ENCODE measurements at regions of chr10 and their contacts with region 1.

Region 1: DNA sequence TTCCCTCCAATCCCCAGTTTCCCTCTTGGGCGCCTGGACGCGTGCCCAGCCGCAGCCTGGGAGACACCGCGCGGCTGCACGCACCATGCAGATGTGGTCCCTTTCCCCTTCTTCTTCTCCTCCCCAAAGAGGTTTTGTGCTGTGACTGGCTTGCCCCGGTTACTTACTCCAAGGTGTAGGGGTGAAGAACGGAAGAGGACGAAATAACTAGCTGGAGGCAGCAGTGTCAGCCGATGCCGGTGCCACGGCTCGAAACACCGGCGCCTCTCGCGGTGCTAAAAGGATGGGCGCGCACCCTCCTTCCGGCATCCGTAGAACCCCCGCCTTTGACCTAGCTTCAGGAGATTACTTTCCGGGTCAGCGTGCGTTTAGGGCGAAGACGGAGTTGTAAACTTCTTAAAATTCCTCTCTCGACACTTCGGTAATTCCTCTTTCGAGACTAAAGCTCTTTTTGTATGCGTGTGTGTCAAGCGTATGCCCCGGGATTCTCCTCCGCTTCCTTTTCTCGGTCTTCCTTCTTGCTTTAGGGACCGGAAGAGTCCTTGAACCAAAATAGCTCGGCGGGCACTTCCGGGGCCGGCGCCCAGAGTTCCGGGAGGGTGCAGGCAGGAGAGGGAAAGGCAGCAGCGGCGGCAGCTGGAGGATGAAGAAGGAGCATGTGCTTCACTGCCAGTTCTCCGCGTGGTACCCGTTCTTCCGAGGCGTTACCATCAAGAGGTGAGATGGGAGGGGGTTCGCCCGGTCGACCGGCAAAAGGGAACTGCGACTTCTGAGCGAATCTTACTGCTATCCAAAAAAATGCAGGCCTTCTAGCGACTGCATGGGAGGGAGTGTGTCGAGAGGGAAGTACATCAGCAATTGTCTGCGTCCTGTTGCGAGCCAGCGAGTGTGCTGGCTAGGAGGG is at the starts of genes CDC123 and NUDT5:
- DNase-seq: peak; percentile 83
- H3K4me3 Mint-ChIP-seq: peak within 1 kb of the TSS; percentile 90
- H3K27ac Mint-ChIP-seq: peak within 1 kb of the TSS; percentile 97
- H3K4me1 Mint-ChIP-seq: peaks cover 60% of the 10 kb centered on the region
- H3K27me3 Mint-ChIP-seq: no peaks in the 10 kb centered on the region
- total RNA-seq, gene CDC123: 190 and 191 TPM in 2 replicates
- total RNA-seq, gene NUDT5: 121 and 131 TPM in 2 replicates

Region 2: GRCh38 chr10:11181978-11182377 is 1013.9 kb before region 1 on chr10:
- intact Hi-C with region 1: no loop called
- DNase-seq: no peak
- H3K4me3 Mint-ChIP-seq: no peak overlapping the region
- H3K27ac Mint-ChIP-seq: peak overlapping the region; percentile 81
- H3K4me1 Mint-ChIP-seq: peaks cover 52% of the 10 kb centered on the region
- H3K27me3 Mint-ChIP-seq: no peaks in the 10 kb centered on the region

Region 3: GRCh38 chr10:12042797-12043651 is 152.8 kb before region 1 on chr10 and contains the start of gene UPF2:
- intact Hi-C with region 1: loop called (anchors 1 kb)
- DNase-seq: peak; percentile 94
- H3K4me3 Mint-ChIP-seq: peak within 1 kb of the TSS; percentile 99
- H3K27ac Mint-ChIP-seq: peak within 1 kb of the TSS; percentile 99
- H3K4me1 Mint-ChIP-seq: peaks cover 34% of the 10 kb centered on the region
- H3K27me3 Mint-ChIP-seq: no peaks in the 10 kb centered on the region
- total RNA-seq, gene UPF2: 38.9 and 43.6 TPM in 2 replicates

Region 4: DNA sequence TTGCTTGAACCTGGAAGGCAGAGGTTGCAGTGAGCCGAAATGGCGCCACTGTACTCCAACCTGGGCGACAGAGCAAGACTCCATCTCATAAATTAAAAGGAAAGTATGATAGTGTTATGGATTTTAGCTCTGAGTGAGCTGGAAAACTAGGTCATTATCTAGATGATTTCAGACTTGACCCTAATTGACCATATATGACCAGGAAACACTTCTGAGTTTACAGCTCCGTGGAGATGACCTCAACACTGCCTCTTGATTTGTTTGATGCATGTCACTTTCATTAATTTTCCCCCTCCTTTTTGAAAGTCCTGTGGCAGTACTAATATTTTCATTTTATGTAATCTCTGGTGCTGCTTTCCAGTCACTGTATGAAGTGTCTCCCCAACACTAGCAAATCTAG is 74.2 kb before region 1 on chr10:
- intact Hi-C with region 1: loop called (anchors 2 kb)
- DNase-seq: no peak
- H3K4me3 Mint-ChIP-seq: peak overlapping the region; percentile 59
- H3K27ac Mint-ChIP-seq: peak overlapping the region; percentile 95
- H3K4me1 Mint-ChIP-seq: peaks cover 34% of the 10 kb centered on the region
- H3K27me3 Mint-ChIP-seq: no peaks in the 10 kb centered on the region

Region 5: DNA sequence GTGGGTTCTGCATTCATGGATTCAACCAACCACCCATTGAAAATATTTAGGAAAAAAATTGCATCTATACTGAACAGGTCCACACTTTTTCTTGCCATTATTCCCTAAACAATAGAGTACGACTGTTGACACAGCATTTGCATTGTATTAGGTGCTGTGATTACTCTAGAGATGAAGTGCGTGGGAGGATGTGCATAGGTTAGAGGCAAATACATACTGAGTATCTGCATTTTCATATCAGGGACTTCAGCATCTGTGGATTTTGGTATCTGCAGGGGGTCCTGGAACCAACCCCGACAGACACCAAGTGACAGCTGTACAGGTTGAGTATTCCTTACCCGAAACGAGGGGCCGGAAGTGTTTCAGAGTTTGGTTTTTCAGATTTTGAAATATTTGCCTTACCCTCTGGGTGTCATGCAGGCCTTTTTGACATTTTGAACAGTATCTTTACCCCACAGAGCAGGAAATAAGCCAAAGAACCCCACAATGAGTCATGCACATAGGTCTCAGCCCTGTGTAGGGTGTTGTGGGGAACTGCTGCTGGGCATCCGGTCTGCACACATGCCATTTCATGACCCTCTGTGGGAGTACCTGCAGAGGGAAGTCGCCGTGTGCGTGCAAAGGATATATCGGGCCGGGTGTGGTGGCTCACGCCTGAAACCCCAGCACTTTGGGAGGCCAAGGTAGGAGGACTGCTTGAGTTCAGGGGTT is 14.6 kb before region 1 on chr10:
- intact Hi-C with region 1: loop called (anchors 1 kb)
- DNase-seq: peak; percentile 62
- H3K4me3 Mint-ChIP-seq: peak overlapping the region; percentile 30
- H3K27ac Mint-ChIP-seq: peak overlapping the region; percentile 72
- H3K4me1 Mint-ChIP-seq: peaks cover 44% of the 10 kb centered on the region
- H3K27me3 Mint-ChIP-seq: no peaks in the 10 kb centered on the region

Region 6: GRCh38 chr10:12241810-12242529 is 46.1 kb after region 1 on chr10:
- intact Hi-C with region 1: loop called (anchors 2 kb)
- DNase-seq: no peak
- H3K4me3 Mint-ChIP-seq: peak overlapping the region; percentile 59
- H3K27ac Mint-ChIP-seq: peak overlapping the region; percentile 80
- H3K4me1 Mint-ChIP-seq: peaks cover 26% of the 10 kb centered on the region
- H3K27me3 Mint-ChIP-seq: no peaks in the 10 kb centered on the region

Measured in activated T-helper 1 cell treated with anti-CD3 and anti-CD28 coated beads, Interleukin-12 subunit alpha, Interleukin-12 subunit beta, Interleukin-2, Interleukin-4 antibody, amounts not matched to agents 30 ng/mL and 10 ng/mL and 1 ng/mL, durations not matched to agents 14 hours and 24 hours and 36 hours (primary cell).